Activated B cell treated with CpG ODN at 0.5 μM for 24 hours (primary cell): ENCODE measurements at regions of chr19 and their contacts with region 1.

Region 1: DNA sequence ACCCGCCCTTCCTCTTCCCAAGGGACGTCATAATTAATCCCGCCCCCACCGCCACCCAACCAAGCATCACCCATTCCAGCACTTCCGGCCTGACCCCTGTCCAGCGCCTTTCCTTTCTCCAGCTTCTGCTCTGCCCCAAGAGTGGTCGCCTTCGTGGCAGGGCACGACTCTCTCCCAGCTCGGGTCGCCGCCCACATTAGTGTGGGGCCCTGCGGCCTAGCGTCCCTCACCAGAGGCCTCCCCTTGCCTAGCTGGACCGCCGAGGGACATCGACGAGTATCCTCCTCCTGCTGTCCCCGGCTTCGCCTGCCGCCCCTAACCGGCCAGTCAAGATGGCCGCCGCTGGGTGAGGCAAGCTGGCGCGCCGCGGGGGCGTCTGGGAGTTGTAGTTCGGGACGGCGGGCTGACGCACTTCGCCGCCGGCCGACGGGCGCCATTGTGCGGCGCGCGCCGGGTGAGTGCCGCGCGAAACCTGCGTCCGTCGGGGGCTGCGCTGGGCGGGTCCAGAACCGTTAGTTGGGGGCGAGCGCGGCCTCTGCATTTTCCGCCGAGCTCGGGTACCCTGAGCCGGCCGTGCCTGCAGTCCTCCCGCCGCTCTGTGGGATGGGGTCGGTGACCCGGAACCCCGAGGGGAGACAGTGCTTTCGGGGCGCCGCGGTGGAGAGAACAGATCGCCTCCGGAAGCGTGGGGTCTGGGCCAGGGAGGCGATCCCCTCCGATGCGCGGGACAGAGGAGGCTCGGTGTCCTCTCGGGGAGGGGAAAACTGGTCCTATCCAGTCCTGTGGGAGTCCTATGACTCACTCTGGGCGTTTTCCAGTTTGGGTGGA is at the start of gene ZNF274:
- DNase-seq: peak; percentile 93
- ATAC-seq: peak; percentile 84
- H3K4me3 Mint-ChIP-seq: peak within 1 kb of the TSS; percentile 92
- H3K27ac Mint-ChIP-seq: peak within 1 kb of the TSS; percentile 98
- H3K4me1 Mint-ChIP-seq: peaks cover 24% of the 10 kb centered on the region
- H3K27me3 Mint-ChIP-seq: no peaks in the 10 kb centered on the region
- CTCF ChIP-seq: no peak
- total RNA-seq, gene ZNF274: 47.2 and 50.3 TPM in 2 replicates

Region 2: GRCh38 chr19:57362997-57363705 is 820.1 kb before region 1 on chr19 and contains the starts of genes TRAPPC2B and ZNF547:
- CTCF ChIA-PET with region 1: no interaction called
- POLR2A ChIA-PET with region 1: no interaction called
- intact Hi-C with region 1: loop called (anchors 1 kb)
- DNase-seq: peak; percentile 99
- ATAC-seq: peak; percentile 94
- H3K4me3 Mint-ChIP-seq: peak within 1 kb of the TSS; percentile 92
- H3K27ac Mint-ChIP-seq: peak within 1 kb of the TSS; percentile 95
- H3K4me1 Mint-ChIP-seq: peaks cover 17% of the 10 kb centered on the region
- H3K27me3 Mint-ChIP-seq: no peaks in the 10 kb centered on the region
- CTCF ChIP-seq: no peak
- total RNA-seq, gene TRAPPC2B: 9.7 and 10.2 TPM in 2 replicates
- total RNA-seq, gene ZNF547: 6.0 and 6.3 TPM in 2 replicates

Region 3: GRCh38 chr19:58002384-58003173 is 180.6 kb before region 1 on chr19 and contains the start of gene ZNF606:
- CTCF ChIA-PET with region 1: no interaction called
- POLR2A ChIA-PET with region 1: interaction called, 15 read pairs
- intact Hi-C with region 1: no loop called
- DNase-seq: peak; percentile 87
- ATAC-seq: peak; percentile 97
- H3K4me3 Mint-ChIP-seq: peak within 1 kb of the TSS; percentile 88
- H3K27ac Mint-ChIP-seq: peak within 1 kb of the TSS; percentile 87
- H3K4me1 Mint-ChIP-seq: peaks cover 38% of the 10 kb centered on the region
- H3K27me3 Mint-ChIP-seq: no peaks in the 10 kb centered on the region
- CTCF ChIP-seq: no peak
- total RNA-seq, gene ZNF606: 27.8 and 32.9 TPM in 2 replicates

Region 4: DNA sequence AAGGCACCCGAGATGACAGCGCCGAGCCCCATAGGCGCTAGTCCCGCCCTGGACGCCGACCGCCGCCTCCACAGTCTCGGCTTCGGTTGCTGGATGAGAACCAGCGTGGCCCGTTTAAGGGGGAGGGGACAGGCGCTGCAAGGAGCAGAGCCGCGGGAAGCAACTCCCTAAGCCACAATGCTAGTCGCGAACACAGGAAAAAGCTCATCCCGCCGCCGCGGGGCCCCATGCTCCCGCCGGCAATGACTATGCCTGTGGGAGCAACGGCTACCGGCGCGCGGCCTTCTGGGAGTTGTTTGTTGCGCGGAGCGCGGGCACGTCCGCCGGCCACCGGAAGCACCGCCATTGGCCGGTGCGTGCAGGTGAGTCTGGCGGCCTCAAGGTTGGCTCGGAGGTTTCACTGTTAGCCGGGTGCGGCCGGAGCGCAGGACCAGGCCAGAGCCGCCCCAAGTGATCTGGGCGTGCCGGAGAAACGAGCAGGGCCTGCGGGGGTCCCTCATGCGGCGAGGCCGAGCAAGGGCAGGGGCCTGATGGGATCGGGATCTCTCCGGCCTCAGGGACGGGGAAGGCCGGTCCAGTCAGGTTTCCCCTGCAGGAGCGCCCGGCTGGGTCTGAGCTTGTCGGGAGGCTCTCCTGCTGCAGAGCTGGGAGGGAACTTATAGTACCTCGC is 45.5 kb after region 1 on chr19 and contains the start of gene ZNF544:
- CTCF ChIA-PET with region 1: interaction called, 3 read pairs
- POLR2A ChIA-PET with region 1: interaction called, 17 read pairs
- intact Hi-C with region 1: loop called (anchors 2 kb)
- DNase-seq: peak; percentile 66
- ATAC-seq: peak; percentile 83
- H3K4me3 Mint-ChIP-seq: peak within 1 kb of the TSS; percentile 97
- H3K27ac Mint-ChIP-seq: peak within 1 kb of the TSS; percentile 85
- H3K4me1 Mint-ChIP-seq: peaks cover 23% of the 10 kb centered on the region
- H3K27me3 Mint-ChIP-seq: no peaks in the 10 kb centered on the region
- CTCF ChIP-seq: no peak
- total RNA-seq, gene ZNF544: 45.2 and 61.7 TPM in 2 replicates

Region 5: DNA sequence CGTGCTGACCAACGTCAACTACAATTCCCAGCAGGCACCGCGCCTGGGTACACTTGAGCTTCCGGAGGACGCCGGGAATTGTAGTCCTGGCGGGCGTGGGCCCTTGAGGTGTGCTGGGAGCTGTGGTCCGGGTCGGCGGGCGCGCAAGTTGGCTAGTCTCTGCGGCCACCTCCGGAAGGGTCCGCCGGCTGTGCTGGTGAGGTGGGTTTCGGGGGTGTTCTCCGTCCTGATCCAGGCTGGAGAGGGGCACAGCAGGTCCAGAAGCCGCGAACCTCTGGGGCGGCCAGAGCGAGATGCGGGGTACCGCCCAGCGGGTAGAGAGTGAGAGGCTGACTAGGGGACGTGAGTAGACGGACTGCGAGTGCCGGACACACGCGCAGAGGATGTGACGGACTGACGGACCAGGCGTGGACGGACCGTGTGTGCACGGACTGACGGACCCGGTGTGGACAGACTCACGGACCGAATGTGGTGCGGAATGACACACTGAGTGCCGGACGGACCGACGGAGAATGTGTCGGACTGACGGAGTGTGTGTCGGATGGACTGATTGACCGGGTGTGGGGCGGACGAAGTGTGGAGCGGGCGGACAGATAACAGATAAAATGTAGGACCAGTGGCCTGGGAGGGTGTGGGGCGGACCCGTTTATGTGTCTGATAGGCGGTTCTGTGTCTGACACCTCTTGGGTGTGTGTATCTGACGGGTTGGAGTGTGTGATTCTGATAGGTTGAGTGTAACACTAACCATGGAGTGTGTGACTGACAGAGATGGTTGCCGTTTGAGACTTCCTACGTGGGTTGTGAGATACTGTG is 143.9 kb after region 1 on chr19 and contains the start of gene ZSCAN22:
- CTCF ChIA-PET with region 1: no interaction called
- POLR2A ChIA-PET with region 1: interaction called, 9 read pairs
- intact Hi-C with region 1: loop called (anchors 1 kb)
- DNase-seq: peak; percentile 82
- ATAC-seq: peak; percentile 88
- H3K4me3 Mint-ChIP-seq: no peak within 1 kb of the TSS
- H3K27ac Mint-ChIP-seq: no peak within 1 kb of the TSS
- H3K4me1 Mint-ChIP-seq: peaks cover 2% of the 10 kb centered on the region
- H3K27me3 Mint-ChIP-seq: no peaks in the 10 kb centered on the region
- CTCF ChIP-seq: no peak
- total RNA-seq, gene ZSCAN22: 4.7 and 4.8 TPM in 2 replicates

Region 6: GRCh38 chr19:58400916-58401839 is 218.0 kb after region 1 on chr19:
- CTCF ChIA-PET with region 1: no interaction called
- POLR2A ChIA-PET with region 1: no interaction called
- intact Hi-C with region 1: loop called (anchors 1 kb)
- DNase-seq: peak; percentile 96
- ATAC-seq: peak; percentile 96
- H3K4me3 Mint-ChIP-seq: peak overlapping the region; percentile 92
- H3K27ac Mint-ChIP-seq: peak overlapping the region; percentile 90
- H3K4me1 Mint-ChIP-seq: peaks cover 12% of the 10 kb centered on the region
- H3K27me3 Mint-ChIP-seq: peaks cover 7% of the 10 kb centered on the region
- CTCF ChIP-seq: no peak